ENCODE measurements at regions of chr18 and their contacts with region 1.

Region 1: GRCh38 chr18:32425466-32425865 is 45.2 kb downstream of the GAREM1 start:
- DNase-seq: peak; percentile 60
- ATAC-seq: peak; percentile 92
- H3K4me3 ChIP-seq: no peak overlapping the region
- H3K27ac ChIP-seq: no peak overlapping the region
- H3K4me1 ChIP-seq: no peaks in the 10 kb centered on the region; the same call in 1 of the 2 replicates
- H3K27me3 ChIP-seq: no peaks in the 10 kb centered on the region
- CTCF ChIP-seq: no peak
- POLR2A ChIP-seq: no peak
- RAD21 ChIP-seq: no peak

Region 2: GRCh38 chr18:31722369-31722957 is 703.0 kb before region 1 on chr18:
- CTCF ChIA-PET with region 1: no interaction called
- POLR2A ChIA-PET with region 1: no interaction called
- dilution Hi-C with region 1: no loop called
- in situ Hi-C with region 1: no loop called
- intact Hi-C with region 1: no loop called
- DNase-seq: peak; percentile 63
- ATAC-seq: peak; percentile 98
- H3K4me3 ChIP-seq: no peak overlapping the region
- H3K27ac ChIP-seq: no peak overlapping the region
- H3K4me1 ChIP-seq: no peaks in the 10 kb centered on the region
- H3K27me3 ChIP-seq: peaks cover 14% of the 10 kb centered on the region
- CTCF ChIP-seq: peak; percentile 63
- POLR2A ChIP-seq: no peak
- RAD21 ChIP-seq: peak; percentile 56

Region 3: GRCh38 chr18:32389858-32390257 is 35.6 kb before region 1 on chr18:
- CTCF ChIA-PET with region 1: no interaction called
- POLR2A ChIA-PET with region 1: no interaction called
- dilution Hi-C with region 1: no loop called
- in situ Hi-C with region 1: no loop called
- intact Hi-C with region 1: loop called (anchors 5 kb)
- DNase-seq: no peak
- ATAC-seq: no peak
- H3K4me3 ChIP-seq: no peak overlapping the region
- H3K27ac ChIP-seq: no peak overlapping the region
- H3K4me1 ChIP-seq: no peaks in the 10 kb centered on the region
- H3K27me3 ChIP-seq: no peaks in the 10 kb centered on the region
- CTCF ChIP-seq: no peak
- POLR2A ChIP-seq: no peak
- RAD21 ChIP-seq: no peak

Measured in IMR-90 (cell line).